GM12878 (cell line): ENCODE measurements at regions of chr16 and their contacts with region 1.

Region 1: GRCh38 chr16:13110124-13110796 is 208.9 kb downstream of the SHISA9 start:
- DNase-seq: no peak
- ATAC-seq: no peak
- H3K4me3 ChIP-seq: no peak overlapping the region
- H3K27ac ChIP-seq: no peak overlapping the region
- H3K4me1 ChIP-seq: no peaks in the 10 kb centered on the region
- H3K27me3 ChIP-seq: no peaks in the 10 kb centered on the region
- CTCF ChIP-seq: no peak
- EP300 ChIP-seq: no peak
- POLR2A ChIP-seq: no peak
- RAD21 ChIP-seq: no peak

Region 2: GRCh38 chr16:13083681-13084080 is 26.6 kb before region 1 on chr16:
- CTCF ChIA-PET with region 1: interaction called, 5 read pairs
- POLR2A ChIA-PET with region 1: no interaction called
- RAD21 ChIA-PET with region 1: interaction called, 3 read pairs
- SMC1A ChIA-PET with region 1: interaction called, 12 read pairs
- in situ Hi-C with region 1: no loop called
- intact Hi-C with region 1: no loop called
- DNase-seq: no peak
- ATAC-seq: no peak
- H3K4me3 ChIP-seq: no peak overlapping the region
- H3K27ac ChIP-seq: no peak overlapping the region
- H3K4me1 ChIP-seq: no peaks in the 10 kb centered on the region
- H3K27me3 ChIP-seq: no peaks in the 10 kb centered on the region
- CTCF ChIP-seq: no peak
- EP300 ChIP-seq: no peak
- POLR2A ChIP-seq: no peak
- RAD21 ChIP-seq: no peak

Region 3: DNA sequence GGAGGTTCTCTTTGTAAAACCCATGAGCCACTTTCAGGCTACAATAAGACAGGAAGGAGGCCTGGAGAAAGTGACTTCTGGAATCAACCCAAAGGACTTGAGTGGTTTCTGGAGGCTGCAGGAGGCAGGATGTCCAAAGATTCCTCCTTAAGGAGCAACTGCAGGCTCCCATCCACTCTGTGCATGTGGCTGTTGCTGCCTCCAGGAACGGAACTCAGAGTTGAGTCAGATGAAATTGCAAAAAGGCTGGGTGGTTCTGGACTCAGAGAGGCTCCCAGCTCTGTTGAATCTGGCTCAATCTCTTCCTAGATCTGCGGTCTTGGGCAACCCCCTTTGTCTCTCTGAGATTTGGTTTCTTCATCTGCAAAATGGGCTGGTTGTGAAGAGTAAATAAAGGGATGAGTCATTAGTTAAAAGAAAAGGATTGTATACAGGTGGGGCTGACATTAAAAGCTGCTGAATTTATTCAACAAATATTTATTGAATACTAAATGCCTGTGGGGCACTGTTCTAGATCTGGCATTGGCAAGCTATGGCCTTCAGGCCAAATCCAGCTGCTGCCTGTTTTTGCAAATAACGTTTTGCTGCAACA is 11.6 kb before region 1 on chr16:
- CTCF ChIA-PET with region 1: interaction called, 4 read pairs
- POLR2A ChIA-PET with region 1: interaction called, 3 read pairs
- RAD21 ChIA-PET with region 1: interaction called, 5 read pairs
- SMC1A ChIA-PET with region 1: interaction called, 33 read pairs
- in situ Hi-C with region 1: no loop called
- intact Hi-C with region 1: no loop called
- DNase-seq: no peak
- ATAC-seq: peak; percentile 54
- H3K4me3 ChIP-seq: no peak overlapping the region
- H3K27ac ChIP-seq: no peak overlapping the region
- H3K4me1 ChIP-seq: no peaks in the 10 kb centered on the region
- H3K27me3 ChIP-seq: no peaks in the 10 kb centered on the region
- CTCF ChIP-seq: no peak
- EP300 ChIP-seq: no peak
- POLR2A ChIP-seq: no peak
- RAD21 ChIP-seq: no peak